Activated CD4-positive, alpha-beta memory T cell treated with anti-CD3 and anti-CD28 coated beads for 36 hours (primary cell): ENCODE measurements at regions of chr10 and their contacts with region 1.

Region 1: DNA sequence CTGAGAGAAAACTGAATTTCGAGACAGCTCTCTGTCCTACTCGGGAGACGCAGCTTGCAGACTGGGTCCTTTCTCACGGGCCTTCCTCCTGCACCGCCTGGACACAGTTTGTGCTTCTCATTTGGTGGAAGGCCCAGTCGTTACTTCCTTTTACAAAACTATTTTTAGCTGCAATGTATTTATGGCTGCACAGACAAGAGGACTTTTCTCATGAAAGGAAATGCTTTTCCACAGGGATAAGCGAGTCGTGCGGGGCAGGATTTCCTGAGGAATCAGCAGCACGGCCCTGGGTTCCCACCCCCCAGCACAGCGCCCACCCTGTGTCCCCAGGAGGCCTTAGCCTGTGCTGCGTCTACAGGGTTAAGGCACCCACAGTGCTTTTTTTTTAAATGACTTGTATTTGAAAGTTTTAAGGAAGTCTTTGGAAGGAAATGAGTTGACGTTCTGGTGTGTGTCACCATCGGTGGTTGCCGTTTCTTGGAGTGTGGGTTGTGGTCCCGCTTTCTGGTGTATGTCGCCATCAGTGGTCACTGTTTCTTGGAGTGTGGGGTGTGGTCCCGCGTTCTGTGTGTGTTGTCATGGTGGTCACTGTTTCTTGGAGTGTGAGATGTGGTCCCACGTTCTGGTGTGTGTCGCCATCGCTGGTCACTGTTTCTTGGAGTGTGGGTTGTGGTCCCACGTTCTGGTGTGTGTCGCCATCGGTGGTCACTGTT is 50.9 kb downstream of the INPP5A start:
- DNase-seq: peak; percentile 76
- H3K4me3 Mint-ChIP-seq: no peak overlapping the region
- H3K27ac Mint-ChIP-seq: peak overlapping the region; percentile 34
- H3K4me1 Mint-ChIP-seq: peaks cover 37% of the 10 kb centered on the region
- H3K27me3 Mint-ChIP-seq: no peaks in the 10 kb centered on the region

Region 2: DNA sequence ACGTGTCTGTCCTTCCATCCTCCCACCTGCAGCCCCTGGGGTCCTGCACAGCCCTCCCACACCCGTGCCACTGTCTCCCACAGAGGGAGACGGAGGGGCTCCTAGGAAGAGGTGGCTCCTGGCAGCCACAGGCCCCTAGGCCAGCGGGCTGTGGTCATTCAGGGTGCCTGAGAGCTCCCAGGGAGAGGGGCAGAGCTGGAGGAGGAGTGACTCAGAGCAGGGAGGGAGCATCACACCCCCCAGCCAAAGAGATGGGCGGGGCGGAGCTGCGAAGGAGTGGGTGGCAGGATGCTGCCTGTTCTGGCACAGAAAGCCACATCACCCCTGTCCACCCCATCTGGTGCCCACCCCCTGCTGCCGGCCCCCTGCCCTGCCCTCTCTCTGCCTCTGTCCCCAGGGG is 331.2 kb before region 1 on chr10:
- CTCF ChIA-PET with region 1: no interaction called
- POLR2A ChIA-PET with region 1: no interaction called
- intact Hi-C with region 1: no loop called
- DNase-seq: peak; percentile 74
- H3K4me3 Mint-ChIP-seq: no peak overlapping the region
- H3K27ac Mint-ChIP-seq: no peak overlapping the region
- H3K4me1 Mint-ChIP-seq: peaks cover 8% of the 10 kb centered on the region
- H3K27me3 Mint-ChIP-seq: no peaks in the 10 kb centered on the region

Region 3: GRCh38 chr10:132516771-132517725 is 71.4 kb before region 1 on chr10:
- CTCF ChIA-PET with region 1: no interaction called
- POLR2A ChIA-PET with region 1: no interaction called
- intact Hi-C with region 1: no loop called
- DNase-seq: no peak
- H3K4me3 Mint-ChIP-seq: no peak overlapping the region
- H3K27ac Mint-ChIP-seq: no peak overlapping the region
- H3K4me1 Mint-ChIP-seq: no peaks in the 10 kb centered on the region
- H3K27me3 Mint-ChIP-seq: peaks cover 2% of the 10 kb centered on the region

Region 4: GRCh38 chr10:132571650-132572535 is 16.6 kb before region 1 on chr10:
- CTCF ChIA-PET with region 1: no interaction called
- POLR2A ChIA-PET with region 1: interaction called, 3 read pairs
- intact Hi-C with region 1: loop called (anchors 1 kb)
- DNase-seq: peak; percentile 91
- H3K4me3 Mint-ChIP-seq: no peak overlapping the region
- H3K27ac Mint-ChIP-seq: peak overlapping the region; percentile 28
- H3K4me1 Mint-ChIP-seq: peaks cover 23% of the 10 kb centered on the region
- H3K27me3 Mint-ChIP-seq: no peaks in the 10 kb centered on the region

Region 5: GRCh38 chr10:132643709-132644526 is 55.5 kb after region 1 on chr10:
- CTCF ChIA-PET with region 1: no interaction called
- POLR2A ChIA-PET with region 1: no interaction called
- intact Hi-C with region 1: no loop called
- DNase-seq: no peak
- H3K4me3 Mint-ChIP-seq: no peak overlapping the region
- H3K27ac Mint-ChIP-seq: no peak overlapping the region
- H3K4me1 Mint-ChIP-seq: no peaks in the 10 kb centered on the region
- H3K27me3 Mint-ChIP-seq: no peaks in the 10 kb centered on the region